Activated naive CD4-positive, alpha-beta T cell treated with anti-CD3 and anti-CD28 coated beads, Interleukin-2, amount 10 ng/mL, durations not matched to agents 7 days and 5 days (primary cell): ENCODE measurements at regions of chr9 and their contacts with region 1.

Region 1: GRCh38 chr9:94065535-94065961 is 18.7 kb upstream of the PTPDC1 start:
- DNase-seq: peak; percentile 82
- H3K4me3 Mint-ChIP-seq: no peak overlapping the region
- H3K27ac Mint-ChIP-seq: no peak overlapping the region
- H3K4me1 Mint-ChIP-seq: no peaks in the 10 kb centered on the region
- H3K27me3 Mint-ChIP-seq: no peaks in the 10 kb centered on the region

Region 2: GRCh38 chr9:94014065-94014654 is 51.4 kb before region 1 on chr9:
- CTCF ChIA-PET with region 1: interaction called, 12 read pairs
- DNase-seq: no peak
- H3K4me3 Mint-ChIP-seq: no peak overlapping the region
- H3K27ac Mint-ChIP-seq: no peak overlapping the region
- H3K4me1 Mint-ChIP-seq: peaks cover 8% of the 10 kb centered on the region
- H3K27me3 Mint-ChIP-seq: peaks cover 3% of the 10 kb centered on the region

Region 3: GRCh38 chr9:94076557-94076956 is 11.0 kb after region 1 on chr9:
- CTCF ChIA-PET with region 1: interaction called, 14 read pairs
- DNase-seq: no peak
- H3K4me3 Mint-ChIP-seq: no peak overlapping the region
- H3K27ac Mint-ChIP-seq: no peak overlapping the region
- H3K4me1 Mint-ChIP-seq: no peaks in the 10 kb centered on the region
- H3K27me3 Mint-ChIP-seq: no peaks in the 10 kb centered on the region

Region 4: DNA sequence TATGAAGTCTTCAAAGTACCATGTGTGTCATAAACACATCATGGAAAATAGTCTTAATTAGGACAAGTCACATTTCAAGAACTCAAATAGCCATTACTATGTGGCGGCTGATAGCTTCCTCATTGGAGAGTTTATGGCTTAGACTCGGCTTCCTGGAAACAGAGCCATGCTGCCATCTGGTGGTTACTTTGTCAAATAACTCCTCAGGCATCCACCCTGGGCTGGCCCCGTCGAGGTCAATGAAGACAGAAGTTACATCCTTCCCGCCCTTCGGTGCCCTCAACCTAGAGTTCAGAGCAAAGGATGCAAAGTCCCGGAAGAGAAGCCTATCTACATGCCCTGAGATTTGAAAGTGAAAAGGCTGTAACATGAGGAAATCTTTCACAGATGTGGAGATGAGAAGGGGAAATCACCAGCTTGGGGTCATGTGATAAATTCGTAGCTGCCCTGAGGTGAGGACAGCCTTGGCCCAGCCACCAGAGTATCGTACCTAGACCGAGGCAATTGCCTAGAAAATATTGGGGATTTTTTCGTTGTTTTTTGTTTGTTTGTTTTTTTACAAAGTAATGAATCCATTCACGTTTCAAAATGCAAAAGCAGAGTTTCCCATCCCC is 148.1 kb after region 1 on chr9:
- CTCF ChIA-PET with region 1: interaction called, 136 read pairs
- DNase-seq: peak; percentile 81
- H3K4me3 Mint-ChIP-seq: no peak overlapping the region
- H3K27ac Mint-ChIP-seq: no peak overlapping the region
- H3K4me1 Mint-ChIP-seq: peaks cover 4% of the 10 kb centered on the region
- H3K27me3 Mint-ChIP-seq: peaks cover 20% of the 10 kb centered on the region